Activated naive CD4-positive, alpha-beta T cell treated with anti-CD3 and anti-CD28 coated beads for 36 hours (primary cell): ENCODE measurements at regions of chr5 and their contacts with region 1.

Region 1: DNA sequence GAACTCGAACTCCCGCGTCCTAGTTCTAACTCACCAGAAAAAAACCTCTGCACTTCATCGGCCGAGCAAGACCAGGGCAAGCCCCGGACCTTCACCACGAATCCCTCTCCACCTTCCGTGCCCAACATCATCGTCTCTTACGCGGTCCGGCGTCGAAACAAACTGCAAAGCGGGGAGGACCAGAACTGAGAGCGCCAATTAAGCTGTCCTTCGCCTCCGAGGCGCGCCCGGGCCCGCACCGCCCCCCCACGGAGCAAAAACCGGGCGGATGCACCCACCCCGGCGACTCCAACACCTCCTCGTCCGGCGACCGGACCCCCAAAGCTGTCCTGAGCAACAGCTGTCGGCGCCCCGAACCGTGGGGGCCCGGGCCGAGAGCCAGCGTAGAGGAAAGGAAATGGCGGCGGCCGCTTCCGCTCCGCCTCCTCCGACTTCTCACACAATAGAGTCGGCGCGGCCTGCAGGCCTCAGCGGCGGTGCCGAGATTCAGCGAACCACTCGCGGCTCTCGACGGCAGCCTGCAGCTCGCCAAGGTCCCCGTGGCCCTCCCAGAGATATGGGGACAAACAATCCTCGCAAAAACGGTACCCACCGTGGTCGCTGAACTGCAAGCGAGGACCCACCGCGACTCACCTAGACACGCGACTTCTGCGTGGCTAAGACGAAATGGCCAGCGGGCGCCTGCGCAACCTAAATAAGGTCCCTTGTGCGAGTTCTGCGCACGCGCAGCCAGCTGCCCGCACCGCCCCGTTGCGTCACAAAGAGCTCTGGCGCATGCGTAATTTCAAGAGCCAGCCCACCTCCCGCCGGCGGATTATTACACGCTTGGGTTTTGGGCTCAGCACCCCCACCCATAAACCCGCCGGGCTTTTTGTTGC is at the start of gene HNRNPH1:
- DNase-seq: peak; percentile 99
- H3K4me3 Mint-ChIP-seq: peak within 1 kb of the TSS; percentile 99
- H3K27ac Mint-ChIP-seq: peak within 1 kb of the TSS; percentile 99
- H3K4me1 Mint-ChIP-seq: peaks cover 36% of the 10 kb centered on the region
- H3K27me3 Mint-ChIP-seq: no peaks in the 10 kb centered on the region
- total RNA-seq, gene HNRNPH1: 708 to 713 TPM

Region 2: GRCh38 chr5:178859625-178860531 is 763.4 kb before region 1 on chr5 and contains the start of gene ZNF354B:
- CTCF ChIA-PET with region 1: no interaction called
- intact Hi-C with region 1: loop called (anchors 1 kb)
- DNase-seq: peak; percentile 91
- H3K4me3 Mint-ChIP-seq: peak within 1 kb of the TSS; percentile 89
- H3K27ac Mint-ChIP-seq: peak within 1 kb of the TSS; percentile 66
- H3K4me1 Mint-ChIP-seq: peaks cover 21% of the 10 kb centered on the region
- H3K27me3 Mint-ChIP-seq: no peaks in the 10 kb centered on the region
- total RNA-seq, gene ZNF354B: 8.6 to 8.9 TPM

Region 3: DNA sequence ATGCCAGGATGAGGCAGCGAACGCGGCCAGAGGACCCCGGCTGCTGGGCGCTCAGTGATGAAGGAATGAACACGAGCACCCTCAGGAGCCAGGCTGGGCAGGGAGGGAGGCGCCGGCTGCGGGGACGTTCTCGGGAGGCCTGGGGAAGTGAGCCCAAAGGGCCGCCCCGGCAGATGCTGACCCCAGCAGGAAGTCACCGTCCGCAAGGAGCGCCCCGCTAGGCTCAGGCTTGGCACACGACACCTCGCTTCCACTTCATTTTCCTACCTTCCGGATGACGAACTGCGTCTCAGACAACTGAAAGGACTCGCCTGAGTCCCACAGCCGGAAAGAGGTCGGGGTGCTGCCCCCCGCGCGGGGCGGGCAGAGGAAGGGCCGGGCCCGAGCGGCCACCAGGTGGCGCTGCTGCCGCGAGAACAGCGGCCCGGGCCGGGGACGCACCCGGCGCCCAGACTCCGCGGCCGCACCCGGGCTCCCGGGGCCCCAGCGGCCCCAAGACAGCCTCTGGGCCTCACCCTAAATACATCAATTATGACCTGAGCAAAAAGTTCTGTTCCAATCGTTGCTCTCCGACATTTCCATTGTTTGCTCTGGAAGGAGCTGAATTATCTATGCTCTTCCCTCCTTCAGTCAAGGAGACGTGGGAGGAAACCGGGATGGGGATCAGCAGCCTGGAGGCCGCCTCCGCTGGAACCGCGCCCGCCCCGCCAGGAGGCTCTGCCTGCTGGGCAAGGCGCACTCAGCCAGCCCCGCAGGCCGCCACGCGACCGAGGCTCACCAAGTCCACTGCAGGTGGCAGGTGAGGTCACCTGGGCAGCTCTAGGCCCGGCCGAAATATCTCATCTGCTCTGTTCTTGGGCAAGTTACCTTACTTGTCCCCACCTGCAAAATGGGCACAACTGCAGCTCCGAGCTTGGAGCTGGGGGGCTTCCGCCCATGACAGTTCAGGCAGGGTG is 456.1 kb before region 1 on chr5:
- CTCF ChIA-PET with region 1: no interaction called
- intact Hi-C with region 1: loop called (anchors 5 kb)
- DNase-seq: peak; percentile 76
- H3K4me3 Mint-ChIP-seq: no peak overlapping the region
- H3K27ac Mint-ChIP-seq: no peak overlapping the region
- H3K4me1 Mint-ChIP-seq: peaks cover 3% of the 10 kb centered on the region
- H3K27me3 Mint-ChIP-seq: peaks cover 5% of the 10 kb centered on the region

Region 4: GRCh38 chr5:179559284-179560252 is 63.7 kb before region 1 on chr5:
- CTCF ChIA-PET with region 1: no interaction called
- intact Hi-C with region 1: loop called (anchors 1 kb)
- DNase-seq: peak; percentile 98
- H3K4me3 Mint-ChIP-seq: peak overlapping the region; percentile 93
- H3K27ac Mint-ChIP-seq: peak overlapping the region; percentile 91
- H3K4me1 Mint-ChIP-seq: peaks cover 14% of the 10 kb centered on the region
- H3K27me3 Mint-ChIP-seq: no peaks in the 10 kb centered on the region

Region 5: GRCh38 chr5:179732417-179732917 is 109.2 kb after region 1 on chr5 and contains the start of gene MAML1:
- CTCF ChIA-PET with region 1: interaction called, 3 read pairs
- intact Hi-C with region 1: loop called (anchors 1 kb)
- DNase-seq: peak; percentile 100
- H3K4me3 Mint-ChIP-seq: peak within 1 kb of the TSS; percentile 96
- H3K27ac Mint-ChIP-seq: peak within 1 kb of the TSS; percentile 92
- H3K4me1 Mint-ChIP-seq: peaks cover 41% of the 10 kb centered on the region
- H3K27me3 Mint-ChIP-seq: no peaks in the 10 kb centered on the region
- total RNA-seq, gene MAML1: 20.7 TPM

Region 6: GRCh38 chr5:179858586-179859427 is 235.6 kb after region 1 on chr5 and contains the start of gene MRNIP:
- CTCF ChIA-PET with region 1: no interaction called
- intact Hi-C with region 1: loop called (anchors 1 kb)
- DNase-seq: peak; percentile 93
- H3K4me3 Mint-ChIP-seq: peak within 1 kb of the TSS; percentile 93
- H3K27ac Mint-ChIP-seq: peak within 1 kb of the TSS; percentile 82
- H3K4me1 Mint-ChIP-seq: peaks cover 14% of the 10 kb centered on the region
- H3K27me3 Mint-ChIP-seq: no peaks in the 10 kb centered on the region
- total RNA-seq, gene MRNIP: 16.2 to 16.3 TPM

Region 7: GRCh38 chr5:181243512-181244343 is 1620.5 kb after region 1 on chr5 and contains the start of gene RACK1:
- CTCF ChIA-PET with region 1: no interaction called
- intact Hi-C with region 1: loop called (anchors 5 kb)
- DNase-seq: peak; percentile 94
- H3K4me3 Mint-ChIP-seq: peak within 1 kb of the TSS; percentile 95
- H3K27ac Mint-ChIP-seq: peak within 1 kb of the TSS; percentile 99
- H3K4me1 Mint-ChIP-seq: peaks cover 60% of the 10 kb centered on the region
- H3K27me3 Mint-ChIP-seq: no peaks in the 10 kb centered on the region
- total RNA-seq, gene RACK1: 3,176 to 3,362 TPM